ENCODE measurements at regions of chr1 and their contacts with region 1.

Region 1: GRCh38 chr1:67347688-67348472 is 40.2 kb downstream of the IL12RB2 start:
- DNase-seq: peak; percentile 30 to 35
- ATAC-seq: peak; percentile 76 to 90; a peak in 4 of 6 replicates
- H3K4me3 ChIP-seq: no peak overlapping the region
- H3K27ac ChIP-seq: no peak overlapping the region
- H3K4me1 ChIP-seq: no peaks in the 10 kb centered on the region
- CTCF ChIP-seq: peak; percentile 65
- EP300 ChIP-seq: no peak
- POLR2A ChIP-seq: no peak
- RAD21 ChIP-seq: peak; percentile 61 to 63

Region 2: DNA sequence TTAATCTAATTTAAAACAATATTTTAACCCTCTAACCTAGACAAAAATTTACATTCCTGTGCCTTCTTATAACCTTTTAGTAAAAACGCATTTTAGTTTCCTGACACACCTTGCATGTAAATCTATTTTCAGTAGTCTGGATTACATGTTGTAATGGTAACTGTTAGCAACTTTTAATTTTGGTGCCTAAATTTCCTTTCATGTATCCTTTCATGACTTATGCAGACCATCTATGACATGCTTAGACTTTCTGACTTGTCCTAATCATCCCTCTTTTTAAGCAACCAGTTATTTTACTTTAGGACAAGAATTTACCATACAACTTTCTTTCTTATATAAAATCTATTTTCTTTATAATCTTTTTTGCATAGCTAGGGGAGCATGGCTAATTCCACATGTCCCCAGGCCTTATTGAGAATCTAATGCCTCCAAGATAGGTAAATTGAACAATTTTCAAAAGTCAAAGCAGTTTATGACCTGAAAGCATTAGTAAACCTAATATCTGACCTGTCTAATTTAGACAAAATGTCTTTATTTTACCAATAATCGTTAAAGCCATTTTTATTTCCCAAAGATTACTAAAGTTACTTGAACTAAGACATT is 97.7 kb before region 1 on chr1:
- CTCF ChIA-PET with region 1: no interaction called
- POLR2A ChIA-PET with region 1: no interaction called
- DNase-seq: peak in 1 of 2 experiments; percentile 1
- ATAC-seq: no peak
- H3K4me3 ChIP-seq: no peak overlapping the region
- H3K27ac ChIP-seq: no peak overlapping the region
- H3K4me1 ChIP-seq: no peaks in the 10 kb centered on the region
- CTCF ChIP-seq: no peak
- EP300 ChIP-seq: no peak
- POLR2A ChIP-seq: no peak
- RAD21 ChIP-seq: no peak

Region 3: GRCh38 chr1:67327864-67328466 is 19.9 kb before region 1 on chr1:
- CTCF ChIA-PET with region 1: no interaction called
- POLR2A ChIA-PET with region 1: no interaction called
- DNase-seq: no peak
- ATAC-seq: no peak
- H3K4me3 ChIP-seq: no peak overlapping the region
- H3K27ac ChIP-seq: no peak overlapping the region
- H3K4me1 ChIP-seq: no peaks in the 10 kb centered on the region
- CTCF ChIP-seq: no peak
- EP300 ChIP-seq: no peak
- POLR2A ChIP-seq: no peak
- RAD21 ChIP-seq: no peak

Region 4: DNA sequence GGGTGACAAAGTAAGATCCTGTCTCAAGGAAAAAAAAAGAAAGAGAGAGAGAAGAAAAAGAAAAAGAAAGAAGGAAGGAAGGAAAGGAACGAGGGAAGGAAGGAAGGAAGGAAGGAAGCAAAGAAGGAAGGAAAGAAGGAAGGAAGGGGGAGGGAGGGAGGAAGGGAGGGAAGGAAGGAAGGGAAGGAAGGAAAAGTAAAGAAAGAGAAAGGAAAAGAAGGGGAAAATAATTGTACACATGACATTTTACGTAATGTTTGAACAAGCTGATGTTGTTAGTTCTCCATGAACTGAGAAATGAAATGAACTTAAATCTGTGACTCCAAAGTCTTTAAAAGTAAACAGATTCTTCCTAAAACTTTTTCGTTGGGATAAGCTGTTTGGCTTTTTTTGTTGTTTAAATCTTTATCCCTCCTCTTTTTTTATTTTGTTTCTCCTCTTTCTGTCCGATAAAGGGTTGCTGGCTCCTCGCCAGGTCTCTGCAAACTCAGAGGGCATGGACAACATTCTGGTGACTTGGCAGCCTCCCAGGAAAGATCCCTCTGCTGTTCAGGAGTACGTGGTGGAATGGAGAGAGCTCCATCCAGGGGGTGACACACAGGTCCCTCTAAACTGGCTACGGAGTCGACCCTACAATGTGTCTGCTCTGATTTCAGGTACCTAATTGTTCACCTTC is 19.6 kb after region 1 on chr1:
- CTCF ChIA-PET with region 1: interaction called, 12 read pairs
- POLR2A ChIA-PET with region 1: no interaction called
- DNase-seq: peak; percentile 15 to 42
- ATAC-seq: peak; percentile 81 to 87
- H3K4me3 ChIP-seq: no peak overlapping the region
- H3K27ac ChIP-seq: no peak overlapping the region; a peak in 1 of 6 replicates
- H3K4me1 ChIP-seq: peaks cover 14% of the 10 kb centered on the region; the same call in 1 of the 3 replicates
- CTCF ChIP-seq: no peak
- EP300 ChIP-seq: no peak
- POLR2A ChIP-seq: no peak
- RAD21 ChIP-seq: no peak

Region 5: DNA sequence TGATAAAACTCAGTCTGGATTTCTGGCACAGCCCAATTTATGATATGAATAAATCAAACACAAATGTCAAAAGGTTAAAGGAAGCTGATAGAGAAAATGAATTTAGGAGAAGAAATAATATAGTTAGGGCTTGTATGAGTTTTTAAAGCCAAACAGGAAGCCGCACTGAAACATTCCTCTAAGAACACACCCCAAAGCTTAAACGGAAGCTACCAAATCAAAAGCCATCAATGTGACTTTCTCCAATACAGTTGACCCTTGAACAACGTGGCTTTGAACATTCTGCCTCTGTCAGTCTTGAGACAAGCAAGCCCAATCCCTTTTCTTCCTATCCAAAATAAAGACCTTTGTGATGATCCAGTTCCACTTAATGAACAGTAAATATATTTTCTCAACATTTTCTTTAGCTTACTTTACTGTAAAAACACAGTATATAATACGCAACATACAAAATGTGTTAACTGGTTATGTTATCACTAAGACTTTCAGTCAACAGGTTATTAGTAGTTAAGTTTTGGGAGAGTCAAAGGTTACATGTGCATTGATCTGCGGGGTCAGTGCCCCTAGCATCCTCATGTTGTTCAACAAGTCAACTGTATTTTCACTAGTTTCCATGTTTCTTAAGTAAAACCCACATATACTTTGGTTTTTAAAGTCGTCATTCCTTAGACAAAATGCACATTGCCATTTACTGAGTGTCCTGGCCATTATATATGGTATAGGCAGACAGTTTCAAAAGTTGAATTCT is 71.1 kb after region 1 on chr1:
- CTCF ChIA-PET with region 1: no interaction called
- POLR2A ChIA-PET with region 1: no interaction called
- DNase-seq: no peak
- ATAC-seq: no peak
- H3K4me3 ChIP-seq: no peak overlapping the region
- H3K27ac ChIP-seq: no peak overlapping the region
- H3K4me1 ChIP-seq: no peaks in the 10 kb centered on the region
- CTCF ChIP-seq: no peak
- EP300 ChIP-seq: no peak
- POLR2A ChIP-seq: no peak
- RAD21 ChIP-seq: no peak

Region 6: DNA sequence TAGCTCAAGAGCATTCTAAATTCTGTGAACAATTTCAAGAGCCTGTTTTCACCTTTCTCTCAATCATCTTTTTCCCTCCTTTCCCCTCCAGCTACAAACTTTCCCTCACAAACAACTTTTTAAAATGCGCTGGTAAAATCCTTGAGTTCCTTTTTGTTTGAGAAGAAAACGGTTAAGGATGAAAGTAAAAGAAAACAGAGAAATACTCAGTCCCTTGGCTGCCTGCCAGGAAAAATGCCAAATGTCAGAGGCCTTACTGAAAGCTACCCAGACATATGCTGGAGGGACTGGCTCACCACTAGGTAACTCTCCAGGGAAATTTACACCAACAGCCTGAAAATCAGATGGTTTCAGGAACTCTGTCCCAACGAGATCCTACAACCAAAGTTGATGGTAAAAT is 93.3 kb after region 1 on chr1:
- CTCF ChIA-PET with region 1: no interaction called
- POLR2A ChIA-PET with region 1: no interaction called
- DNase-seq: no peak
- ATAC-seq: no peak
- H3K4me3 ChIP-seq: no peak overlapping the region
- H3K27ac ChIP-seq: no peak overlapping the region
- H3K4me1 ChIP-seq: no peaks in the 10 kb centered on the region
- CTCF ChIP-seq: no peak
- EP300 ChIP-seq: no peak
- POLR2A ChIP-seq: no peak
- RAD21 ChIP-seq: no peak